HepG2 (cell line): ENCODE measurements at regions of chr3 and their contacts with region 1.

Region 1: GRCh38 chr3:14780927-14781507 is 37.7 kb upstream of the FGD5 start:
- DNase-seq: peak; percentile 61
- ATAC-seq: peak; percentile 99
- H3K4me3 ChIP-seq: no peak overlapping the region
- H3K27ac ChIP-seq: no peak overlapping the region
- H3K4me1 ChIP-seq: peaks cover 39% of the 10 kb centered on the region
- H3K27me3 ChIP-seq: no peaks in the 10 kb centered on the region
- CTCF ChIP-seq: peak; percentile 94
- EP300 ChIP-seq: no peak
- POLR2A ChIP-seq: no peak
- RAD21 ChIP-seq: peak; percentile 86

Region 2: GRCh38 chr3:14508961-14509795 is 271.8 kb before region 1 on chr3:
- CTCF ChIA-PET with region 1: no interaction called
- POLR2A ChIA-PET with region 1: no interaction called
- in situ Hi-C with region 1: no loop called
- intact Hi-C with region 1: loop called (anchors 5 kb)
- DNase-seq: peak; percentile 30
- ATAC-seq: peak; percentile 84
- H3K4me3 ChIP-seq: no peak overlapping the region
- H3K27ac ChIP-seq: no peak overlapping the region
- H3K4me1 ChIP-seq: no peaks in the 10 kb centered on the region
- H3K27me3 ChIP-seq: peaks cover 4 to 24% of the 10 kb centered on the region in 2 experiments; a peak in 3 of 5 replicates
- CTCF ChIP-seq: peak; percentile 87
- EP300 ChIP-seq: no peak
- POLR2A ChIP-seq: no peak
- RAD21 ChIP-seq: peak; percentile 79

Region 3: DNA sequence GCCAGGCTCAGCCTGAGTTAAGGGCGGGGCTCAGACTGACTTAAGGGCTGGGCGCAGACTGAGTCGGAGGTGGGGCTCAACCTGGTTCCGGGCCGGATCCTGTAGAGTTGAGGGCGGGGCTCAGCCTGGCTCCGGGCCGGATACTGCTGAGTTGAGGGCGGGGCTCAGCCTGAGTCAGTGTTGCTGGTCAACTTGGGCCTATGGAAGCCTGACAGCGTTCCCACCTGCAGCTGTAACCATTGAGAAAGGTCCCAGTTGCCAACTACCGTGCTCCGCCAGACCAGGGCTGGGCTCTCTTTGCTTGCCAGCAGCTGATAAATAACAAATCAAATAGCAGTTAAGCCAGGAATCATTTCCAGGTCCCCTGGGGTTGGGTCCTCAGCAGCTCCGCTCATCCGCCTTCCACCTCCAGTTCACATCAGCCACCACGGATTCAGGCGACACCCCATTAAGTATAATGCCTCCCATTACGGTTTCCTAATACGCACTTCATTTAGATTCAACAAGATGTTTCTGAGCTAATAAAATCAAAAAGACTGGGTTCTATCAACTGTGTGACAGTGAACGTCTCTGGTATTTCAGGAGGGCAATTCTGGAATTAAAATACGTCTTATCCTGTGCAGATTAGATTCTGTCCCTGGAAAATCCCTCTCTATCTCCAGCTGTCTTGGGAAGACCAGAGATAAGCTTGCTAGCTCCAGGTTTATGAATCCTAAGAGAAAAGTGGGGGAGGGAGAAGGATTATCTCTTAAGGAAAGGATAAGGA is 248.1 kb before region 1 on chr3:
- CTCF ChIA-PET with region 1: no interaction called
- POLR2A ChIA-PET with region 1: no interaction called
- in situ Hi-C with region 1: no loop called
- intact Hi-C with region 1: no loop called
- DNase-seq: peak; percentile 9
- ATAC-seq: peak; percentile 87
- H3K4me3 ChIP-seq: no peak overlapping the region
- H3K27ac ChIP-seq: no peak overlapping the region
- H3K4me1 ChIP-seq: no peaks in the 10 kb centered on the region
- H3K27me3 ChIP-seq: peaks cover 3 to 20% of the 10 kb centered on the region in 2 experiments; a peak in 3 of 5 replicates
- CTCF ChIP-seq: no peak
- EP300 ChIP-seq: no peak
- POLR2A ChIP-seq: no peak
- RAD21 ChIP-seq: no peak

Region 4: GRCh38 chr3:14633819-14634424 is 147.1 kb before region 1 on chr3:
- CTCF ChIA-PET with region 1: interaction called, 13 read pairs
- POLR2A ChIA-PET with region 1: no interaction called
- in situ Hi-C with region 1: no loop called
- intact Hi-C with region 1: loop called (anchors 2 kb)
- DNase-seq: peak; percentile 53
- ATAC-seq: peak; percentile 58
- H3K4me3 ChIP-seq: no peak overlapping the region
- H3K27ac ChIP-seq: no peak overlapping the region
- H3K4me1 ChIP-seq: peaks cover 57% of the 10 kb centered on the region
- H3K27me3 ChIP-seq: peaks cover 0 to 3% of the 10 kb centered on the region in 2 experiments; a peak in 1 of 5 replicates
- CTCF ChIP-seq: peak; percentile 72
- EP300 ChIP-seq: no peak
- POLR2A ChIP-seq: no peak
- RAD21 ChIP-seq: no peak

Region 5: DNA sequence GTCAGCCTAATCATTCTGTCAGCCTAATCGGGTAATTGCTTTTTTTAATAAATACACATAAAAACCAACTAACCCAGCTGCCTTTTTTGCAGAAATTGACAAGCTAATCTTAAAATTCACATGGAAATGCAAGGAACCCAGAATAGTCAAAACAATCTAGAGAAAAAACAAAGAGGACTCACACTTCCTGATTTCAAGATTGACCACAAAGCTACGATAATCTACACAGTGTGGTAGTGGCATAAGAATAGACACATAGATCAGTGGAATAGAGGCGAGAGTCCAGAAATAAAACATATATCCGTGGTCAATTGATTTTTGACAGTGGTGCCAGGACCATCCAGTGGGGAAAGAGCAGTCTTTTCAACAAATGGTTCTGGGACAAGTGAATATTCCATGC is 108.4 kb before region 1 on chr3:
- CTCF ChIA-PET with region 1: interaction called, 33 read pairs
- POLR2A ChIA-PET with region 1: interaction called, 4 read pairs
- in situ Hi-C with region 1: loop called (anchors 5 kb)
- intact Hi-C with region 1: loop called (anchors 1 kb)
- DNase-seq: no peak
- ATAC-seq: no peak
- H3K4me3 ChIP-seq: no peak overlapping the region
- H3K27ac ChIP-seq: no peak overlapping the region
- H3K4me1 ChIP-seq: peaks cover 21% of the 10 kb centered on the region
- H3K27me3 ChIP-seq: no peaks in the 10 kb centered on the region
- CTCF ChIP-seq: no peak
- EP300 ChIP-seq: no peak
- POLR2A ChIP-seq: no peak
- RAD21 ChIP-seq: no peak

Region 6: DNA sequence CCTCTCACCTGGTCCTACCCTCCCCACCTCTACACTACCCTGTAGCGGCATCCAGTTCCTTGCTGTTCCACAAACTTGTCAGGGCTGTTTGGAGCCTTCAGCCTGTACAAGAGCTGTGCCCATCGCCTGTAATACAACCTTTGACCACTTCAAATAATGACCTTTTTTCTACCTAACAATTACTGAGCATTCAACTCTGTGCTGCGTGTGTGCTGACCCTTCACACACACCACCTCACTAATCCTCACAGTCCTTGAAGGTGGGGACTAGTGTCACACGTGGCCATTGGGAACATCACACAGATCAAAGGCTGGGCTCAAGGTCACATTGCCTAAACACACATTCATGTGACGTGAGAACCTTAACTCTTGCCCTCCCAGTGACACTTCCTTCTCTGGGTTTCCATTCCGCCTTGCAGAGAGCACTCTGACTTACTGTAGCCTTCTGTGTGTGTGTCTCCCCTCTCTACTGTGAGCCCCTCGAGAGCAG is 103.0 kb before region 1 on chr3:
- CTCF ChIA-PET with region 1: interaction called, 33 read pairs
- POLR2A ChIA-PET with region 1: interaction called, 4 read pairs
- in situ Hi-C with region 1: loop called (anchors 5 kb)
- intact Hi-C with region 1: loop called (anchors 1 kb)
- DNase-seq: peak; percentile 96
- ATAC-seq: peak; percentile 96
- H3K4me3 ChIP-seq: 0 out of 6 replicates have a peak overlapping the region, but pooled peaks of 1 of the 3 experiments have one; percentile 17
- H3K27ac ChIP-seq: peak overlapping the region; percentile 82
- H3K4me1 ChIP-seq: peaks cover 59% of the 10 kb centered on the region
- H3K27me3 ChIP-seq: no peaks in the 10 kb centered on the region
- CTCF ChIP-seq: peak; percentile 20; the same call in 1 of the 2 replicates
- EP300 ChIP-seq: peak; percentile 73 to 91; a peak in 3 of 4 replicates
- POLR2A ChIP-seq: no peak
- RAD21 ChIP-seq: peak; percentile 28; the same call in 1 of the 2 replicates